ENCODE measurements at regions of chr1 and their contacts with region 1.

Region 1: DNA sequence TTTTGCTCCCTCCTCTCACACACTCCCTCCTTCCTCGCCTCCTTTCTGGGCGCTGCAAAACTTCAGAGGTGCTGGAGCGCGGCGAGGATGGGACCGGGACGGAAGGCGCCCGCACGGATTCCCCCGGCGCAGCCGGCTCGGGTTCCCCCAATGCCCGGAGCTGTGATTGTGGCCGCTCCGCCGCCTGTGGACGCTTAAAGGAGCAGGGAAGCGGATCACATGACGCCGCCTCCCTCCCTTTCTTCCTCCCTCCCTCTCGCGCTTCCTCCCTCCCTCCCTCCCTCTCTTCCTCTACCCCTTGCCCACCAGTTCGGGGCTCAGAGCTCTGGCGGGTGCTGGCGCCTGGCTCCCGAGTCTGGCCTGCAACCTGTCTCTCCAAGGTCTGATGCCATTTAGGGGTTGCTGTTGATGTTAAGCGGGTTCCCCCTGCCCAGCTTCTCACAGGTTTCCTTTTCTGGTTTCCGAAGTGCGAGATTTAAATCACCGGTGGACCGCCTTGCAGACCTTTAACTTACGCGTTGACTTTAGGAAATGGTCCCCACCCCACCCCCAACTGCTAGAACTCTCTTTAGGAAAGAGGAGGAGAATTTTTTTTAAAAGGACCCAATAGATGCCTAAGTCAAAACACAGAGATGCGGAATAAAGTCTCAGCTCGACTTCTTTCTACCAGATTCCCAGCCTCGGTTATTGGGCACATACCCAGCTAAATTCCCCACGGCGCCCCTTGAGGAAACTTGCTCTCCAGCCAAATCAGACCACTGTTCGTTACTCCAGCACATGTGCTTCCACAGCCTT is at the start of gene WLS:
- DNase-seq: peak; percentile 83 to 90 (median 87)
- ATAC-seq: peak; percentile 77 to 88 (median 87)
- H3K4me3 ChIP-seq: peak within 1 kb of the TSS; percentile 58 to 93 (median 78)
- H3K27ac ChIP-seq: peak within 1 kb of the TSS; percentile 47 to 93 (median 83)
- H3K4me1 ChIP-seq: peaks cover 0 to 39% (median 15%) of the 10 kb centered on the region in 12 donors
- H3K27me3 ChIP-seq: peaks cover 0 to 13% (median 0%) of the 10 kb centered on the region in 9 donors
- CTCF ChIP-seq: peak in 3 of 12 donors; percentile 9 to 35 (median 30)
- POLR2A ChIP-seq: peak; percentile 57 to 81
- total RNA-seq, gene WLS: 78.2 to 115 (median 107) TPM

Region 2: DNA sequence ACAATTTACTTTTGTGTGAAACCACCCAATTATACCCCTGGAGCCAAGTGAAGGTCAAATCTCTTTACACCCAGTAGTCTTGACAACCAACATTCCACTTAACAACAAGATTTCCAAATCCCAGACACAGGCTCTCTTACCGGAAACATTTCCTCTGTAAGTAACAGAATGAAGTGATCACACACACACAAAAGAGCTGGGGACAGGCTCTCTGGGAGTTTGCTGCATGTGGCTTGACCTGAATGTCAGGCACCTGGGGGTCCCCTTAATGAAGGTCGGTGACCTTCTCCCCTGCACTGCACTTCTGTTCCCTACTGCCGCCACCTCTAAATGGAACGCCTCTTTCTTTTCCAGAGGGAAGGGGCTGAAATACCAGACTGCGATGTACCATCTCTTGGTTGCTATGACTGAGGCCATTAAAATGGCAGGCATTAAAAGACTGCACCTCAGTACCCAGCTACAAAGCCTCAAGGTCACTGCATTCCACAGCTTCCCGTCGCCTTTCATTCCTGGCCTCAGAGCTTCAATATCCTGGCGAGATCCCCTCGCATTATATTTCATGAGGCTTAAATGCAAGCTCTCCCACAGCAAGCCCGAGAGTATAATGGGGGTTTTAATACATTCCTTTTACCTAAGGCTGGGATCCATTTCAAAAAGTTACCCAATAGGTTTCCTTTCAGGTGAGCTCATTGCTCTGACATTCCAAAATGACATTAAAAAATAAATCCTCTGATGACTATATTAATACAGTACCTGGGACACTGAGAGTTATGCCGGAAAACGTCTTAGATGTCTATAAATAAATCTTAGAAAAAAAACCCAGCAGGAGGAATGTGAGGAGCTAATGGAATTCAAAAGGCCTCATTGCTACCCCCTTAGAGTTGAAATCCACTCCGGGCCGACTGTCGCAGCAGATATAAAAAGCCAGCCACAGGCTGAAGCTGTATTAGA is 91.2 kb before region 1 on chr1:
- intact Hi-C with region 1: loop called in 5 of 10 experiments (anchors 5 to 10 kb)
- DNase-seq: no peak
- ATAC-seq: peak; percentile 32 to 45 (median 42)
- H3K4me3 ChIP-seq: no peak overlapping the region
- H3K27ac ChIP-seq: peak overlapping the region in 9 of 12 donors; percentile 37 to 74 (median 52)
- H3K4me1 ChIP-seq: peaks cover 0 to 24% (median 10%) of the 10 kb centered on the region in 12 donors
- H3K27me3 ChIP-seq: no peaks in the 10 kb centered on the region
- CTCF ChIP-seq: no peak
- POLR2A ChIP-seq: no peak

Region 3: DNA sequence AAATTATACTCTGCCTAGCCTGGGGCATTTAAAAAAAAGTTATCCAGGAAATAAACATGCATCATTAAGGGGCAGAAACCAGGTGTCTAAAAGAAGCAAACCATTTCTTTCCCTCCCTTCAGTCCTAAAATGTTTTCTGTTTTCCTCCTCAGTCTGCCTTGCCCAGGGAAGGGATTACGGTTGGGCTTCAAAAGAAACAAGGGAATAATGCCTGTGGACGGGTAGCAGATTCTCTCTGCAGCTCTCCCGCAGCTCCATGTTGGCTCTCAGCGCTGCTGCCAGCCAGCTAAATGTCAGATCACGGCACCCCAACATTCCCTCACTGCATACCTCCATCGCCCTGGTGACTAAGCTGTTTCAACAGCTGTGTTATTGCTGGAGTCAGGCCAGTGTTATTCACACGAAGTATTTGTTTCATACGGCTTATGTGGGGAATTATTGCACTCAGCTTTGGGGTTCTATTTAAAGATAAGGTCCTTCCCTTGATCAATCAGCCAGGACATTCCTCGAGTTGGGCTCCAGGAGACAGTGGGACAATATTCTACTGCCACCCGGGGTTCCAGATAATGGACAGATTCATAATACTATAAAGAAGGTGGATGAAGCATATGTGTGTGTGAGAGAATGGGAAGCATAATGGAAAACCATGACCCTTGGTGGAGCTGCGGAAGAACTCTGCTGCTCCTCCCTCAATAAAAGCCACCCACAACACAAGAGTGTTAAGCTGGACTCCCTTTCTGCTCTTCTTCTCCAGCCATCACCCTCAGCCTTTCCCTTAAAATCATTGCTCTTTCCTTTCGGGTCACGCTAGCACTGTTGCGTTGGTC is 58.4 kb before region 1 on chr1:
- intact Hi-C with region 1: loop called in 7 of 10 experiments (anchors 5 to 10 kb)
- DNase-seq: peak in 4 of 5 donors; percentile 46 to 67 (median 64)
- ATAC-seq: peak; percentile 20 to 81 (median 72)
- H3K4me3 ChIP-seq: peak overlapping the region in 5 of 12 donors; percentile 3 to 37 (median 16)
- H3K27ac ChIP-seq: peak overlapping the region; percentile 4 to 83 (median 68)
- H3K4me1 ChIP-seq: peaks cover 0 to 70% (median 49%) of the 10 kb centered on the region in 12 donors
- H3K27me3 ChIP-seq: no peaks in the 10 kb centered on the region
- CTCF ChIP-seq: no peak
- POLR2A ChIP-seq: no peak

Region 4: DNA sequence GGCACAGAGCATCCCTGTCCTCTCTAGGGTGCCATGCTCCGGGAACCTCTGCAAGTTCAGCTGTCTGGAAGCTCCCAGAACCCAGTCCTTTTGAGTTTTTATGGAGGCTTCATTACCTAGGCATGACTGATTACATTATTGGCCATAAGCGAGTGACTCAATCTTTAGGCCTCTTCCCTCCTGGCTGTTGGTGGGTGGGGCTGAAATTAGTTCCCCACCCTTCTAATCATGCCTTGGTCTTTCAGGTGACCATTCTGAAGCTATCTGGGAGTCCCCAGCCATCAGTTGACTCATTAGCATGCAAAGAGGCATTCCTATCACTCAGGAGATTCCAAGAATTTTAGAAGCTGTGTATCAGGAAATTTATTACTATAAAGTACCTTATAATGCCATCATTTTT is 46.8 kb before region 1 on chr1:
- intact Hi-C with region 1: no loop called
- DNase-seq: no peak
- ATAC-seq: no peak
- H3K4me3 ChIP-seq: no peak overlapping the region
- H3K27ac ChIP-seq: no peak overlapping the region
- H3K4me1 ChIP-seq: no peaks in the 10 kb centered on the region
- H3K27me3 ChIP-seq: no peaks in the 10 kb centered on the region
- CTCF ChIP-seq: no peak
- POLR2A ChIP-seq: no peak

Region 5: GRCh38 chr1:68269637-68270426 is 37.3 kb after region 1 on chr1:
- intact Hi-C with region 1: no loop called
- DNase-seq: no peak
- ATAC-seq: no peak
- H3K4me3 ChIP-seq: no peak overlapping the region
- H3K27ac ChIP-seq: no peak overlapping the region
- H3K4me1 ChIP-seq: peaks cover 0 to 6% (median 0%) of the 10 kb centered on the region in 12 donors
- H3K27me3 ChIP-seq: no peaks in the 10 kb centered on the region
- CTCF ChIP-seq: no peak
- POLR2A ChIP-seq: no peak

Region 6: GRCh38 chr1:68313735-68314134 is 81.2 kb after region 1 on chr1:
- intact Hi-C with region 1: loop called in 1 of 10 experiments (anchors 5 kb)
- DNase-seq: no peak
- ATAC-seq: no peak
- H3K4me3 ChIP-seq: no peak overlapping the region
- H3K27ac ChIP-seq: no peak overlapping the region
- H3K4me1 ChIP-seq: peaks cover 0 to 9% (median 0%) of the 10 kb centered on the region in 12 donors
- H3K27me3 ChIP-seq: no peaks in the 10 kb centered on the region
- CTCF ChIP-seq: no peak
- POLR2A ChIP-seq: no peak

Region 7: DNA sequence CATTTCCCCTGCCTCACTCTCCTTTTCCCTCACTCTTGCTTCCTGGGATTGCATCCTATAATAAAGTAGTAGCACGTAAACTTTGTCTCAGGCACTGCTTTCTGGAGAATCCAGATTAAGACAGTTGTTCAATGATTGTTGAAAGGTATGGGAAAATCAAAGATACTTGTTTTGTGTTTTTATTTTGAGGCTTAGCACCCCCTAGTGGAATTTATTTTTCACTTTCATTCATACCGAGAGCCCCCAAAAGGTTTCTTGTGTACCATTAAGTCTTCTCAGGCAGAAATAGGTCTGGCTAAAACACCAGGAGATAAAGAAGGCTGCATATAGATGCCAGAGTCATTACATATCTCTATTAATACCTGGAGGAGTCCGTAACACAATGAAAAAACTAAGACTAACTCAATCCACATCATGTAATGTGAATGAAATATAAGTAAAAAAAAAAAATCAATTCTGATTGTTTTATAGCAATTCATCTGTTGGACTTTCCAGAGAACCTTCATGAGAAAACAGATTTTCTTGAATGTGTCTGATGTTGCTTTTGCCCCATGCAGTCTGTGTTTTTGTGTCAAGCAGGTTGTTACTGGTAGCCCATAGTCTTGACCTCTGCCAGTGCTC is 113.7 kb after region 1 on chr1:
- intact Hi-C with region 1: loop called in 1 of 10 experiments (anchors 5 kb)
- DNase-seq: no peak
- ATAC-seq: peak in 1 of 4 donors; percentile 34
- H3K4me3 ChIP-seq: no peak overlapping the region
- H3K27ac ChIP-seq: no peak overlapping the region
- H3K4me1 ChIP-seq: peaks cover 0 to 5% (median 0%) of the 10 kb centered on the region in 12 donors
- H3K27me3 ChIP-seq: no peaks in the 10 kb centered on the region
- CTCF ChIP-seq: peak; percentile 37 to 67 (median 43)
- POLR2A ChIP-seq: no peak

Measured in heart left ventricle (tissue), 16 donors.